ENCODE measurements at regions of chr17 and their contacts with region 1.

Region 1: GRCh38 chr17:1365445-1366039 is 34.5 kb downstream of the YWHAE start:
- DNase-seq: peak; percentile 45
- ATAC-seq: peak; percentile 81
- H3K4me3 ChIP-seq: no peak overlapping the region
- H3K27ac ChIP-seq: peak overlapping the region; percentile 50; the same call in 1 of the 2 replicates
- H3K4me1 ChIP-seq: peaks cover 47% of the 10 kb centered on the region
- H3K27me3 ChIP-seq: no peaks in the 10 kb centered on the region
- CTCF ChIP-seq: peak; percentile 91

Region 2: GRCh38 chr17:1315891-1316403 is 49.6 kb before region 1 on chr17:
- CTCF ChIA-PET with region 1: no interaction called
- POLR2A ChIA-PET with region 1: no interaction called
- in situ Hi-C with region 1: no loop called
- intact Hi-C with region 1: no loop called
- DNase-seq: no peak
- ATAC-seq: no peak
- H3K4me3 ChIP-seq: no peak overlapping the region
- H3K27ac ChIP-seq: no peak overlapping the region
- H3K4me1 ChIP-seq: no peaks in the 10 kb centered on the region
- H3K27me3 ChIP-seq: no peaks in the 10 kb centered on the region; the same call in 1 of the 2 replicates
- CTCF ChIP-seq: no peak

Region 3: DNA sequence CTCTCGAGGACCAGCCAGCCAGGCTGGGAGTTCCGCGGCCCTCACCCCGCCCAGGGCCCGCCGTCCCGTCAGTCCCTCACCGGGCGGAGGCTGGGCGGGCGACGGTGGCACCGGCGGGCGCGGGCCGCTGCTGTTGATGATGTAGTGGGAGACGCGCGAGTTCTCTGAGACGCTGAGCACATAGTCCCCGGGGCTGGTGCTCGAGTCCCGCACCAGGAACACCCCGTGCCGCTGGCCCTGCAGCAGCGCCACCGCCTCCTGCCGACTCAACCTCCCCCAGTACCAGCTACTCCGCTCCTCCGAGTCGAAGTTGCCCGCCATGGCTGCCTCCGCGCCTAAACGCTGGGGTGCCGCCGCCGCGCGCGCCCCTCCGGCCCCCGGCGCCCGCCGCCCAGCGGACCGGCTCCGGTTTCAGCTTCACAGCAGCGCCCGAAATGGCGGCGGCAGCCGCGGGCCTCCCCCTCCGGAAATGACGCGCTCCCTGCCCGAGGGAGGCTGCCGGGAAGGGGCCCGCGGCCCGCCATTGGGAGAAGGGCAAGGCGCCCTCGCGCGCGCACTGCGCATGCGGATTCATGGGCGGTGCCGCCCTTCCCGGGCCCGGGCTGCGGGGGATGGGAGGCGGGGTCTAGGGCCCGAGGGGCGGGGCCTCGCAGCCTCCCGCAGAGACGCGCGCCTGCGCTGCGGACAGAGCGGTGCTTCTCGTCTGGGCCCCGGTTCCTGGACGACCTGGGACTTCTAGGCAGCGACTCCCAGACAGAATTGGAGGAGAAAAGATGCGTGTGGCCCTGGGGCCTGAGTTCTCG is 90.5 kb after region 1 on chr17 and contains the start of gene CRK:
- CTCF ChIA-PET with region 1: no interaction called
- POLR2A ChIA-PET with region 1: no interaction called
- in situ Hi-C with region 1: no loop called
- intact Hi-C with region 1: loop called (anchors 10 kb)
- DNase-seq: peak; percentile 64
- ATAC-seq: peak; percentile 91
- H3K4me3 ChIP-seq: peak within 1 kb of the TSS; percentile 85 to 90
- H3K27ac ChIP-seq: peak within 1 kb of the TSS; percentile 91
- H3K4me1 ChIP-seq: peaks cover 19% of the 10 kb centered on the region
- H3K27me3 ChIP-seq: no peaks in the 10 kb centered on the region
- CTCF ChIP-seq: no peak
- total RNA-seq, gene CRK: 67.0 TPM

Measured in Panc1 (cell line).